Activated T-helper 1 cell treated with anti-CD3 and anti-CD28 coated beads, Interleukin-12 subunit alpha, Interleukin-12 subunit beta, Interleukin-2, Interleukin-4 antibody, amounts not matched to agents 30 ng/mL and 10 ng/mL and 1 ng/mL, durations not matched to agents 14 hours and 24 hours and 36 hours (primary cell): ENCODE measurements at regions of chr4 and their contacts with region 1.

Region 1: DNA sequence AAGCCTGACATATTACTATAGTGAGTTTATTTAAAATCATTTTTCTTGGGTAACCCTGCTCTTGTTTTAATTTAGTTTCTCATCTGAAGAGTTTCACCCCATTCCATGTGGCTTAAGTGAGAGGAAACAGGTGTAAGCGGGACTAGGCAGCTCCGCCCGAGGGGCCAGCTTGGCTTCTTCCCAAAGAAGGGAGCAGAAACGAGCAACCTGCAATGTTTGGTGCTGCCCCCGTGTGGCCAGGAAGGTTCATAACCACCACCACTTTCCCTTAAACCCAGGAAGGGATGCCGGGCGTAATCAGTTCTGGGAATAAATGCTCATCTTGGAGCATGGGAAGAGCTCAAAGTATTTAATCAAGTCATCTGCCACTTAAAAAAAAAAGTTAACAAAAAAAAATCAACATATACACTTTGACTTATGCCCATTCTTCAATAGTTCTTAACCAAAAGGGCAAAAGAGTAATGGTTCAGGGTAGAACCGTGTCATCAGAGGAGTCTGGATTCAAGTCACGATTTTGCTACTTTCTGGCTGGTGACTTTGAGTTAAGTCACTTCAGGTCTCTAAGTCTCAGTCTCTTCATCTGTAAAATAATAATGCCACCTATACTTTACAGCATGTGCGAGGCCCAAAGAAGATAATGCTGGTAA is 147.9 kb downstream of the NSUN7 start:
- DNase-seq: peak; percentile 39
- H3K4me3 Mint-ChIP-seq: peak overlapping the region; percentile 66
- H3K27ac Mint-ChIP-seq: no peak overlapping the region
- H3K4me1 Mint-ChIP-seq: no peaks in the 10 kb centered on the region
- H3K27me3 Mint-ChIP-seq: no peaks in the 10 kb centered on the region

Region 2: GRCh38 chr4:40710502-40711254 is 187.0 kb before region 1 on chr4:
- intact Hi-C with region 1: no loop called
- DNase-seq: no peak
- H3K4me3 Mint-ChIP-seq: no peak overlapping the region
- H3K27ac Mint-ChIP-seq: no peak overlapping the region
- H3K4me1 Mint-ChIP-seq: peaks cover 21% of the 10 kb centered on the region
- H3K27me3 Mint-ChIP-seq: peaks cover 4% of the 10 kb centered on the region

Region 3: DNA sequence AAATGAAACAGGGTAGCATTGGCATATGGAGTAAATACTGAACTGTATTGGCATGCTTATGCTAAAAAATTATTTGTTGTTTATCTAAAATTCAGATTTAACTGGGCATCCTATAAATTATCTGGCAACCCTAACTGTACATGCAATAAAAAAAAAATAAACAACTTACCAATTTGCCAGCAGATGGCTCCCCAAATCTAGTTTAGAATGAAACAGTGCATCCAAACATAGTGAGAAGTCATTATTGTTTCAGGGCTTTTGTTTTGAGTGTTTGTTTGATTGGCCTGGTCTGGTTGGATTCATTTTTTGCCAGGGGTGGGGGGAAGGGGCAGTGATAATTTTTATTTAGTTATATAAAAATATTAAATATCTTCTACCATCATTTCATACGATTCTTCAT is 160.8 kb before region 1 on chr4:
- intact Hi-C with region 1: loop called (anchors 1 kb)
- DNase-seq: no peak
- H3K4me3 Mint-ChIP-seq: no peak overlapping the region
- H3K27ac Mint-ChIP-seq: no peak overlapping the region
- H3K4me1 Mint-ChIP-seq: peaks cover 22% of the 10 kb centered on the region
- H3K27me3 Mint-ChIP-seq: peaks cover 10% of the 10 kb centered on the region

Region 4: DNA sequence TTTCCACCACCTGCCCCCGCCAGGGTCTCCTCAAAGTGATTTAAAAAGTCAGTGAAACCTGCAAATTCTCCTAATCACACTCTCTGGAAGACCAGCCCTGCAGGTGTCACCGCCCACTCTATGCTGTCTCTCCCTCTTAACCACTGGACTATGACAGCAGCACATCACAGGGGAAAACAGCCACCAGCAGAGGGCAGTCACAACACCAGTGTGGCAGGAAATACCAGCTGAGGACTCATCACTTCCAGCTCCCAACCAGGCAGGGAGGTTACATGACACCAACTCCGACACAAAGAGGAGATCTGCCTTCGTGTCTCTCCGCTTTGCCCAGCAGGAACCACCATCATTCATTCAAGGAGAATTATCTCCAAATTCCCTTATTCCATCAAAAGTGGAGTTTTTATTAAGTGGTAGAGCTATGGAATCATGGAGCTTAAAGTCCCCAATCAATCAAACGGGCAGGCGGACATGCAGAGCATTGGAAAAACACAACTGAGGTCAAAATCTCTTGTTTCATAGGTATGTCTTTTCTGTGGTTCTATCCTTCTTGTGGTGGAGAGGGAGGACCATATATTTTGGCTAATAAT is 56.6 kb before region 1 on chr4:
- intact Hi-C with region 1: loop called (anchors 1 kb)
- DNase-seq: peak; percentile 59
- H3K4me3 Mint-ChIP-seq: no peak overlapping the region
- H3K27ac Mint-ChIP-seq: no peak overlapping the region
- H3K4me1 Mint-ChIP-seq: peaks cover 8% of the 10 kb centered on the region
- H3K27me3 Mint-ChIP-seq: peaks cover 3% of the 10 kb centered on the region

Region 5: GRCh38 chr4:40856822-40857362 is 40.8 kb before region 1 on chr4:
- intact Hi-C with region 1: loop called (anchors 5 kb)
- DNase-seq: peak; percentile 57
- H3K4me3 Mint-ChIP-seq: peak overlapping the region; percentile 76
- H3K27ac Mint-ChIP-seq: no peak overlapping the region
- H3K4me1 Mint-ChIP-seq: peaks cover 15% of the 10 kb centered on the region
- H3K27me3 Mint-ChIP-seq: peaks cover 35% of the 10 kb centered on the region

Region 6: GRCh38 chr4:40916880-40917279 is 19.2 kb after region 1 on chr4:
- intact Hi-C with region 1: loop called (anchors 2 kb)
- DNase-seq: no peak
- H3K4me3 Mint-ChIP-seq: no peak overlapping the region
- H3K27ac Mint-ChIP-seq: no peak overlapping the region
- H3K4me1 Mint-ChIP-seq: peaks cover 34% of the 10 kb centered on the region
- H3K27me3 Mint-ChIP-seq: no peaks in the 10 kb centered on the region

Region 7: GRCh38 chr4:40963897-40964478 is 66.3 kb after region 1 on chr4:
- intact Hi-C with region 1: no loop called
- DNase-seq: no peak
- H3K4me3 Mint-ChIP-seq: no peak overlapping the region
- H3K27ac Mint-ChIP-seq: no peak overlapping the region
- H3K4me1 Mint-ChIP-seq: no peaks in the 10 kb centered on the region
- H3K27me3 Mint-ChIP-seq: peaks cover 5% of the 10 kb centered on the region